T-cell (primary cell): ENCODE measurements at regions of chr2 and their contacts with region 1.

Region 1: DNA sequence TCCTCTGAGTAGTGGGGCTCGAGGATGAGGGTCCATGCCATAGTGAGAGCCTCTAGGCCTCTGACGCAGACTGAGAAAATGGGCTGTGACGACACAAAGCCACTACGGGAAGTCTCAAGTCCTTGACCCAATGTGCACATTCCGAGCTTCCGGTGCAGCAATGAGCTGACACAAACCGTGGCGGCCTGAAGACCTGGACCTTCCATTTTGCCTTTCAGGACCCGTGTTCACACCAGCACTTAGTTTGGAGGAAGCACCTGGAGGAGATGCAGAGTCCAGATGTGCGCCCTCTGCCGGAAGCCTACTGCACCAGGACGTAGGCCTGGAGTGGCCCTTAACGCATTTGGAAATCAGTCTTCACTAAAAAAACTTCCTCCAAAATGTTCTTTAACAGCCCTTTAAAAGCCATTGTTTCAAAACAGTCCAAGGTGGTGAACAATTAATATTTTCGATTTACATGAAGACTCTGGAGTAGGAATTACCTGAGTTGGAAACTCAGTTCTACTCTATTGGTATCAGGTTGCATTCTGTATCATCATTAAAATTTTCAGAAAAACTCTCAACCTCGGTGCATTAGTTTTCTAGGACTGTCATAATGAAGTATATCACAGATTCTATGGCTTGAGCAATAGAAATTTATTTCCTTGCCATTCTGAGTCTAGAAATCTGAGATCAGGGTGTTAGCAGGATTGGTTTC is 33.9 kb downstream of the BMP10 start:
- DNase-seq: peak in 34 of 35 experiments; percentile 30 to 81 (median 62)
- ATAC-seq: peak; percentile 62 to 85 (median 70)
- H3K4me3 ChIP-seq: no peak overlapping the region
- H3K4me3 Mint-ChIP-seq: no peak overlapping the region
- H3K27ac ChIP-seq: no peak overlapping the region
- H3K27ac Mint-ChIP-seq: peak overlapping the region; percentile 34 to 43
- H3K4me1 ChIP-seq: peaks cover 0 to 14% of the 10 kb centered on the region in 2 experiments
- H3K4me1 Mint-ChIP-seq: peaks cover 19 to 52% (median 30%) of the 10 kb centered on the region in 3 donors
- H3K27me3 ChIP-seq: no peaks in the 10 kb centered on the region
- H3K27me3 Mint-ChIP-seq: no peaks in the 10 kb centered on the region

Region 2: GRCh38 chr2:68319398-68320117 is 517.8 kb before region 1 on chr2 and contains the start of gene CNRIP1:
- CTCF ChIA-PET with region 1: no interaction called
- POLR2A ChIA-PET with region 1: no interaction called
- DNase-seq: peak in 4 of 35 experiments; percentile 5 to 12 (median 9)
- ATAC-seq: peak in 2 of 4 experiments; percentile 24 to 37
- H3K4me3 ChIP-seq: peak within 1 kb of the TSS; percentile 31 to 64
- H3K4me3 Mint-ChIP-seq: peak within 1 kb of the TSS; percentile 57 to 75 (median 67)
- H3K27ac ChIP-seq: no peak within 1 kb of the TSS
- H3K27ac Mint-ChIP-seq: peak within 1 kb of the TSS in 1 of 2 donors; percentile 46
- H3K4me1 ChIP-seq: peaks cover 0 to 15% of the 10 kb centered on the region in 2 experiments
- H3K4me1 Mint-ChIP-seq: peaks cover 0 to 14% (median 9%) of the 10 kb centered on the region in 3 donors
- H3K27me3 ChIP-seq: peaks cover 4 to 26% of the 10 kb centered on the region in 2 experiments
- H3K27me3 Mint-ChIP-seq: peaks cover 49 to 51% of the 10 kb centered on the region in 2 donors
- total RNA-seq, gene CNRIP1: 0.53 to 0.63 (median 0.59) TPM in 3 of 5 donors, not detected in the others

Region 3: GRCh38 chr2:68807821-68808266 is 29.5 kb before region 1 on chr2:
- CTCF ChIA-PET with region 1: no interaction called
- POLR2A ChIA-PET with region 1: interaction called in 1 of 2 experiments, 12 read pairs
- DNase-seq: peak in 16 of 35 experiments; percentile 8 to 44 (median 24)
- ATAC-seq: peak in 1 of 4 experiments; percentile 58
- H3K4me3 ChIP-seq: no peak overlapping the region
- H3K4me3 Mint-ChIP-seq: peak overlapping the region in 1 of 3 donors; percentile 27
- H3K27ac ChIP-seq: peak overlapping the region; percentile 66
- H3K27ac Mint-ChIP-seq: peak overlapping the region; percentile 86 to 90
- H3K4me1 ChIP-seq: peaks cover 0 to 30% of the 10 kb centered on the region in 2 experiments
- H3K4me1 Mint-ChIP-seq: peaks cover 63 to 69% (median 67%) of the 10 kb centered on the region in 3 donors
- H3K27me3 ChIP-seq: no peaks in the 10 kb centered on the region
- H3K27me3 Mint-ChIP-seq: no peaks in the 10 kb centered on the region

Region 4: DNA sequence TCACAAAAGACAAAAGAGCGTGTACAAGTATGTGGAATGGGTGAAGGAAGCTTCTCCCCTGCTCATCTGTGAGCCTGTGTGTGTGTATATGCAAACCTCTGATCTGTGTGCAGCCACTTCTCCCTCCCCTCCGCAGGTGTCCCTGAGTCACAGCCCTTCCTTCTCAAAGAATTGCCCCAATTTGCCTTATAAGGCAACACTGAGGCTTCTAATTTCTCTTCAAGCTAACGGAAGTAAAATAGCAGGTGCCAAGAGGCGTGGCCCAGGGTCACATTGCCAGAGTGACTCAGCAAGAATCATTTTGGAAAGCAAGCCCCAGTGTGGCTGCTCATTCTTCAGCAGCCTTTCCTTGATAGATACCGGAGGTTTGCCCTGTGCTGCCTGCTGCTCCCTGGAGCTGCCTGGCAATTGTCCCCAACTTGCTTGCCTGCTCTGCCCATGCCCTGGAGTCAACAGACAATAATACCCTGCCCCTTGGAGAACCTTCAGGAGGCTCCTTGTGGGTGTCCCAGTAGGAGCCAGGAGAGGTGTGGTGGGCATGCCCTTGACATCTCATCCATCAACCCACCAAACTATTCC is 71.2 kb after region 1 on chr2:
- CTCF ChIA-PET with region 1: interaction called, 7 to 15 read pairs
- POLR2A ChIA-PET with region 1: no interaction called
- DNase-seq: peak; percentile 68 to 91 (median 82)
- ATAC-seq: peak; percentile 96 to 98 (median 97)
- H3K4me3 ChIP-seq: no peak overlapping the region
- H3K4me3 Mint-ChIP-seq: peak overlapping the region in 2 of 3 donors; percentile 11 to 63
- H3K27ac ChIP-seq: peak overlapping the region; percentile 79
- H3K27ac Mint-ChIP-seq: peak overlapping the region; percentile 94 to 95
- H3K4me1 ChIP-seq: peaks cover 27 to 49% of the 10 kb centered on the region in 2 experiments
- H3K4me1 Mint-ChIP-seq: peaks cover 33 to 41% (median 36%) of the 10 kb centered on the region in 3 donors
- H3K27me3 ChIP-seq: no peaks in the 10 kb centered on the region
- H3K27me3 Mint-ChIP-seq: no peaks in the 10 kb centered on the region

Region 5: DNA sequence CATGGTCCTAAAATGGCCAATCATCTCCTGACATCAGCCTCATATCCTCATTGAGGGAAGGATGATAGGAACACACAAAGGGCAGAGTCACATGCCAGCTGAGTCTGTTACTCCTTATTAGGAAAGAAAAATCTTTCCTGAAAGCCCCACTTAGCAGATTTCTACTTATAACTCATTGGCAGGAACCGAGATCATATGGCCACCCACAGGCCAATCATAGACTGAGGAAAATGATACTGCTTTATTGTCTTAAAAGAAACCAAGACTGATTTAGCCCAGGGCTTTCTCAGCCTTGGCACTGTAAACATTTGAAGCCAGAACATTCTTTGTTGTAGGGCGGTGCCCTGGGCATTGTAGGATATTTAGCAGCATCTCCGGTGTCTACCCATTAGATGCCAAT is 96.7 kb after region 1 on chr2:
- CTCF ChIA-PET with region 1: no interaction called
- POLR2A ChIA-PET with region 1: no interaction called
- DNase-seq: no peak
- ATAC-seq: no peak
- H3K4me3 ChIP-seq: no peak overlapping the region
- H3K4me3 Mint-ChIP-seq: no peak overlapping the region
- H3K27ac ChIP-seq: no peak overlapping the region
- H3K27ac Mint-ChIP-seq: no peak overlapping the region
- H3K4me1 ChIP-seq: no peaks in the 10 kb centered on the region
- H3K4me1 Mint-ChIP-seq: no peaks in the 10 kb centered on the region
- H3K27me3 ChIP-seq: peaks cover 0 to 12% of the 10 kb centered on the region in 2 experiments
- H3K27me3 Mint-ChIP-seq: peaks cover 0 to 3% of the 10 kb centered on the region in 2 donors